Posterior vena cava (tissue), 2 donors: ENCODE measurements at regions of chr1 and their contacts with region 1.

Region 1: GRCh38 chr1:89762779-89763648 is 57.8 kb upstream of the LRRC8D start:
- DNase-seq: peak; percentile 96

Region 2: DNA sequence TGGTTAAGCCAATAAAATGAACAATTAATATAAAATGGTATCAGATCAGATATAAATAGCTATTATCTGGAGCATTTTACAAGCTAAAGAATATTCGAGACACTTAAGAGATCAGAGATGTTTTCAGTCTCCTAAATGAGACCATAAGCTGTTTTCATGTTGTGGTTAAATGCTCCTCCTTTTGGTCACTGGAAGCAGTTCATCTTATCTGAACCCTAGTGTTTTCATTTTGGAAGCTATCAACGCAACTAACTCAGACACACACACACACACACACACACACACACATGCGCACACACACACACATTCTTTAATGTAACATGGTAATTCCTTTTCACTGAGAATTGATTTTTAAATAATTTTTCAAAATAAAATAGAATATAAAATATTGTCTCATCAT is 140.1 kb before region 1 on chr1:
- intact Hi-C with region 1: loop called in 1 of 2 experiments (anchors 10 kb)
- DNase-seq: no peak

Region 3: GRCh38 chr1:89724369-89725010 is 38.5 kb before region 1 on chr1:
- intact Hi-C with region 1: no loop called
- DNase-seq: no peak